ENCODE measurements at regions of chr7 and their contacts with region 1.

Region 1: DNA sequence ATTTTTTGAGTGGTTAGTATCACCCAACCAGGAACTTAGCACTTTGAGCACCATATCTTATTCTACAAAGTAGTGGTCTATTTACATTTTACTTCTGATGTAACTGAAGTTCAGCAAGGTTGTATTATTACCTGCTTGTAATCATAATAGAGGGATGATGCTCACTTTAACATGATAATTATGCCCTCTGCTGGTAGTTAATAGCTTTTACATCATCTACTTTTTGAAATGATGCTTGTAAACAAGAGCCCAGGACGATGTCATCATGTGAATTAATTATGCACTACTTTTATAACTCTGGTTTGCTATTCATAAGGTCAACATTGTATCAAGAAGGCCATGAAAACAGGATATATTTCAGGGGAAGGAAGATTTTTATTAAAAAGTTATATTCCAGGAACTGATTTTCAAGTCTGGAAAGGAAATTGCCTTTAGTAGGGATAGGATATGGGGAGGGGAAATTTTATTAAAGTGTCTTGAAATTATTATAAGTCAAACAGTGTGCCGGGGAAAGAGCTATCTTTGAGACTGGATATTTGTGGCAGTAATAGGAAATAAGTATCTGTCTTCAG is 80.3 kb upstream of the SCIN start:
- DNase-seq: no peak
- ATAC-seq: no peak
- H3K4me3 ChIP-seq: no peak overlapping the region
- H3K27ac ChIP-seq: no peak overlapping the region
- H3K4me1 ChIP-seq: no peaks in the 10 kb centered on the region
- H3K27me3 ChIP-seq: no peaks in the 10 kb centered on the region
- CTCF ChIP-seq: peak in 7 of 9 donors; percentile 45 to 65 (median 57)

Region 2: GRCh38 chr7:11427686-11428273 is 1062.4 kb before region 1 on chr7:
- intact Hi-C with region 1: loop called in 8 of 10 experiments (anchors 5 to 10 kb)
- DNase-seq: peak in 1 of 2 donors; percentile 29
- ATAC-seq: peak in 1 of 8 donors; percentile 42
- H3K4me3 ChIP-seq: no peak overlapping the region
- H3K27ac ChIP-seq: no peak overlapping the region
- H3K4me1 ChIP-seq: peaks cover 0 to 8% (median 0%) of the 10 kb centered on the region in 9 donors
- H3K27me3 ChIP-seq: no peaks in the 10 kb centered on the region
- CTCF ChIP-seq: peak; percentile 41 to 89 (median 75)

Region 3: GRCh38 chr7:11831736-11832495 is 658.3 kb before region 1 on chr7 and contains the start of gene THSD7A:
- intact Hi-C with region 1: loop called in 5 of 10 experiments (anchors 10 kb)
- DNase-seq: peak; percentile 23 to 48
- ATAC-seq: peak; percentile 83 to 94 (median 88)
- H3K4me3 ChIP-seq: peak within 1 kb of the TSS; percentile 30 to 75 (median 62)
- H3K27ac ChIP-seq: peak within 1 kb of the TSS; percentile 0 to 72 (median 56)
- H3K4me1 ChIP-seq: peaks cover 0 to 25% (median 13%) of the 10 kb centered on the region in 9 donors
- H3K27me3 ChIP-seq: peaks cover 0 to 23% (median 0%) of the 10 kb centered on the region in 7 donors
- CTCF ChIP-seq: peak in 4 of 9 donors; percentile 4 to 33 (median 12)
- total RNA-seq, gene THSD7A: 0.67 to 3.4 (median 1.7) TPM

Region 4: DNA sequence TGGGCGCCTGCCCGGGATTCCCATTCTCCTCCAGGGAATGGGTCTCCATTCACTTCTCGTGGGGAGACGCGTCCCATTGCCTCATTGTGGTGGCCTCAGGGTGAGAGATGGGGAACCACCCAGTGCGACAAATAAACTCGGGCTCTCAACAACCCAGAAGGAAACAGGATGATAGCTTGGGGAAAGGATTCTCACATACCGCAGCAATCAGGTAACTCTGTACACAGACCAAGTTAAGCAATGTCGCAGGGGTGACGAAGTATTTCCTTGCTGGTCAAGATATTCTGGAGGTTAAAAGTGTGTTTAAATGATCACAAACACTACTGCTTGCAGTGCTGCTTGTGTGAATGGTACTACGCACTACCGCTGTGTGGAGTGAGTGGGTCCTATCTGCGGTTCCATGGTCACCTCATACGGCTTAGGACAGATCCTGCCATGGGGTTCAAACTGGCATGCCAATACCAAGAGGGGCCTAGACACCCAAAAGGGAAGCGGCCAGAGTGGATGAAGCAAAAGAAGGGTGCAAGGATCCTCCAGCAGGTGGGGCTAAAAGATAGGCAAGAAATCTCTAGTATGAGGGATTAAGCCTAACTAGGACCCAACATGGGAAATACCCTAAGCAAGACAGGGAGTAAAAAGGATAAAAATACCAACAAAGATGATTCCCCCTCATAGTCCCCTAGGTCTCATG is 422.9 kb before region 1 on chr7:
- intact Hi-C with region 1: loop called in 4 of 10 experiments (anchors 5 to 10 kb)
- DNase-seq: peak in 1 of 2 donors; percentile 26
- ATAC-seq: peak in 4 of 8 donors; percentile 33 to 73 (median 62)
- H3K4me3 ChIP-seq: no peak overlapping the region
- H3K27ac ChIP-seq: no peak overlapping the region
- H3K4me1 ChIP-seq: no peaks in the 10 kb centered on the region
- H3K27me3 ChIP-seq: no peaks in the 10 kb centered on the region
- CTCF ChIP-seq: peak; percentile 24 to 66 (median 61)

Region 5: DNA sequence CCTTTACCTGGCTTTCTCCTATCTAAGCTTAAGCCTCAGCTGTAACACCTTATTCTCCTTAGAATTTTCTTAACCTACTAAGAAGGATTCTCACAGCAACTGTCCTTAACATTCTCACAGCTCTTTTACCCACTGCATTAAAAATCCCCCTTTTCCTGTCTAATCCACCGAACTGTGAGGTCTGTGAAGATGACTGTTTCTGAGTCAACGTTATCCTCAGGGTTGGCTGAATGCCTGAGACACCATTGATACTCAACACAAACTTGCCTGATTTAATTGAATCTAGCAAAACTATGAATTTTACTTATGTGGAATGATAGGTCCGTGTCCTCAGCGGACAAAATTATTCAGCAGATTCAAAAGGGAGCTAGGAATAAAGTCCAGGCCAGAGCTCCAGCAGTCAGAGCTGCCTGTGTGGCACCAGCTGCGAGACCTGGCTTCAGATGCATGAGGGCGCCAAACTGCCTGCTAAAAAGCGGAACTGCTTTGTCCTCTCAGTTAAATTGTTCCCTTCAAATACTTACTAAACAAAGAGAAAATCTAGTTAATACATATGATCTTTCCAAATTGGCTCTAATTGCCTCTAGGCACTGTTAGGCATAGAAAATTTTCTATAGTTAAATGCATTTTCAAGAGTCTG is 53.2 kb before region 1 on chr7:
- intact Hi-C with region 1: loop called in 2 of 10 experiments (anchors 5 to 10 kb)
- DNase-seq: no peak
- ATAC-seq: no peak
- H3K4me3 ChIP-seq: no peak overlapping the region
- H3K27ac ChIP-seq: no peak overlapping the region
- H3K4me1 ChIP-seq: no peaks in the 10 kb centered on the region
- H3K27me3 ChIP-seq: no peaks in the 10 kb centered on the region
- CTCF ChIP-seq: no peak

Region 6: GRCh38 chr7:12458520-12459131 is 31.6 kb before region 1 on chr7:
- intact Hi-C with region 1: loop called in 2 of 10 experiments (anchors 5 kb)
- DNase-seq: no peak
- ATAC-seq: no peak
- H3K4me3 ChIP-seq: no peak overlapping the region
- H3K27ac ChIP-seq: no peak overlapping the region
- H3K4me1 ChIP-seq: no peaks in the 10 kb centered on the region
- H3K27me3 ChIP-seq: peaks cover 0 to 16% (median 0%) of the 10 kb centered on the region in 7 donors
- CTCF ChIP-seq: peak; percentile 20 to 67 (median 57)